ENCODE measurements at regions of chr19 and their contacts with region 1.

Region 1: DNA sequence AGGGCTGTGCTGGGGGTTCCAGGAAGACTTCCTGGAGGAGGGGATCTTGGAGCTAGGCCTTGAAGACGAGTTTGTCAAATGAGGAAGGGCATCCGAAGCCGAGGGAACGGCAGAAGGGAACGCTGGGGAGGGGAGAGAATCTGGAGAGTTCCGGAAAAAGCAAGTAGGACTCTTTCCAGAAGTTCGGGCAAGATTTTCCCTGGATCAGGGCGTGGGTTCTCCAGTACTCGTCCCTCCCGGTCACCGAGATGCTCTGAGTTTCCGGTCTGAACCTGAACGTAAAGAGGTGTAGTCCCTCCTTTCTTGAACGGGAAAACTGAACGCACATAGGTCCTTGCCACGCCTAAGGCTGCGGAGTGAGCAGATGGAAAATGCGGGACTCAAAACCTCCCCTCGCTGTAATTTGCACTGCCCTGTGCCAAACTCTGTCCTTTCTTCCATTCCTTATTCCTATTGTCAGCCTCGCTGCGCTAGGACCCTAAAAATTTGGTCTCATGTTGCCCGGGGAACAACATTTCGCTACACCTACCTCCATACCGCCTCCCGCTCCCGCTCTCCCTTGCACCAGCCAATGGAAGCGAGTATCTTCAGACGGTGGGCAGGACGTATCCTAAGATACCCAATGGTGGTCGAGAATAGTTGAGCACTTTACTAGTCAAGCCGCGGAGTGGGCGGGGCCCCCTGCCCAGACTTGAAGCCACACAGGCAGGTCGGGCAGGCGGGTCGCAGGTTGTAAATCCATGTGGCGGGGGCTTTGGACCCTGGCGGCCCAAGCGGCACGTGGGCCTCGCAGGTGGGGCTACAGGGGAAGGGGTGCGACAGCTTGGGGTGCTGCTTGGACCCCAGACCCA is at the start of gene GTPBP3:
- DNase-seq: peak; percentile 97
- ATAC-seq: peak; percentile 88
- H3K4me3 ChIP-seq: peak within 1 kb of the TSS; percentile 55 to 97 (median 85)
- H3K4me3 Mint-ChIP-seq: peak within 1 kb of the TSS; percentile 92
- H3K27ac ChIP-seq: peak within 1 kb of the TSS; percentile 39 to 85
- H3K27ac Mint-ChIP-seq: peak within 1 kb of the TSS; percentile 92
- H3K4me1 ChIP-seq: peaks cover 19 to 33% of the 10 kb centered on the region in 2 donors
- H3K4me1 Mint-ChIP-seq: peaks cover 40% of the 10 kb centered on the region
- H3K27me3 ChIP-seq: peaks cover 0 to 6% (median 0%) of the 10 kb centered on the region in 4 experiments
- H3K27me3 Mint-ChIP-seq: no peaks in the 10 kb centered on the region
- CTCF ChIP-seq: no peak
- total RNA-seq, gene GTPBP3: 44.3 and 44.9 TPM in 2 replicates

Region 2: GRCh38 chr19:17215125-17215971 is 121.7 kb before region 1 on chr19 and contains the start of gene USE1:
- CTCF ChIA-PET with region 1: no interaction called
- POLR2A ChIA-PET with region 1: no interaction called
- intact Hi-C with region 1: loop called (anchors 1 kb)
- DNase-seq: peak; percentile 93
- ATAC-seq: peak; percentile 93
- H3K4me3 ChIP-seq: peak within 1 kb of the TSS; percentile 41 to 94 (median 80)
- H3K4me3 Mint-ChIP-seq: peak within 1 kb of the TSS; percentile 92
- H3K27ac ChIP-seq: peak within 1 kb of the TSS; percentile 91
- H3K27ac Mint-ChIP-seq: peak within 1 kb of the TSS; percentile 97
- H3K4me1 ChIP-seq: peaks cover 10 to 24% of the 10 kb centered on the region in 2 donors
- H3K4me1 Mint-ChIP-seq: peaks cover 19% of the 10 kb centered on the region
- H3K27me3 ChIP-seq: no peaks in the 10 kb centered on the region
- H3K27me3 Mint-ChIP-seq: no peaks in the 10 kb centered on the region
- CTCF ChIP-seq: no peak
- total RNA-seq, gene USE1: 39.9 and 49.5 TPM in 2 replicates

Region 3: DNA sequence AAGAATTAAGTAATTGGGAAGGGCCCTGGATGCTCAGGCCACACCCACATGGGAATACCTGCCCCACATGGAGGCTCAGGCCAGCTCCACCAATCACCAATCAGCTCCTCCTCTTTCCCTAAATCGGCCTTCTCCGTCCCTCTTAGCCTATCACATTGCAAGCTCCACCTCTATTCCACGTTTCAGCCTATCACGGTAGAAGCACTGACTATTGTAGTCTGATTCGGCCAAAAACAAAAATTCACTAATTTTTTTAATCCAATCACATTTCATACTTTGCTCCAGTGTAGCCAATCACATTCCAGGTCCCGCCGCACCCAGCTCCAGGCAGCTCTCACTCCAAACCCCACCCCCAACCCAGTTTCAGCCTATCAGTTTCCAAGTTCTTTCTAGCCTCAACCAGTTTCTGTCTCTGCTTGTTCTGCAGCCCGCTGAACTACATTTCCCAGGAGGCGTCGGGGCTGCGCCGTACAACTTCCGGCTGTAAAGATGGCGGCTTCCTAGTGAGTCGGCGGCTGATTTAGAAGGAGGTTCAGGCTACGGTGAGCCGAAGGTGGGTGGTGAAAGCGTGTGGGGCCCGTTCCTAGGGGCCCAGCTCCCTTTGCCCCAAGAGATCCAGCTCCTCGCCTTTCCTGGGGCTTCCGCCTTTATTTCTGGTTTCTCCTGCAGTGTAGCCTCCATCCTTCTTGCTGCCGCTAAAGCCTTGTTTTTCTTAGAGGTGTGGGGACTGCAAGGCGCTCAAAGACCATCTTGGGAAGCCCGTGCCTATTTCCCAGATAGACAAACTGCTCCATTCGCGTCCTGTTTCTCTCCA is 69.9 kb before region 1 on chr19 and contains the start of gene BABAM1:
- CTCF ChIA-PET with region 1: no interaction called
- POLR2A ChIA-PET with region 1: no interaction called
- intact Hi-C with region 1: loop called (anchors 1 kb)
- DNase-seq: peak; percentile 98
- ATAC-seq: peak; percentile 89
- H3K4me3 ChIP-seq: peak within 1 kb of the TSS; percentile 76 to 95 (median 87)
- H3K4me3 Mint-ChIP-seq: peak within 1 kb of the TSS; percentile 84
- H3K27ac ChIP-seq: peak within 1 kb of the TSS; percentile 56 to 67
- H3K27ac Mint-ChIP-seq: peak within 1 kb of the TSS; percentile 86
- H3K4me1 ChIP-seq: peaks cover 6 to 24% of the 10 kb centered on the region in 2 donors
- H3K4me1 Mint-ChIP-seq: peaks cover 18% of the 10 kb centered on the region
- H3K27me3 ChIP-seq: no peaks in the 10 kb centered on the region
- H3K27me3 Mint-ChIP-seq: no peaks in the 10 kb centered on the region
- CTCF ChIP-seq: no peak
- total RNA-seq, gene BABAM1: 126 and 129 TPM in 2 replicates

Region 4: DNA sequence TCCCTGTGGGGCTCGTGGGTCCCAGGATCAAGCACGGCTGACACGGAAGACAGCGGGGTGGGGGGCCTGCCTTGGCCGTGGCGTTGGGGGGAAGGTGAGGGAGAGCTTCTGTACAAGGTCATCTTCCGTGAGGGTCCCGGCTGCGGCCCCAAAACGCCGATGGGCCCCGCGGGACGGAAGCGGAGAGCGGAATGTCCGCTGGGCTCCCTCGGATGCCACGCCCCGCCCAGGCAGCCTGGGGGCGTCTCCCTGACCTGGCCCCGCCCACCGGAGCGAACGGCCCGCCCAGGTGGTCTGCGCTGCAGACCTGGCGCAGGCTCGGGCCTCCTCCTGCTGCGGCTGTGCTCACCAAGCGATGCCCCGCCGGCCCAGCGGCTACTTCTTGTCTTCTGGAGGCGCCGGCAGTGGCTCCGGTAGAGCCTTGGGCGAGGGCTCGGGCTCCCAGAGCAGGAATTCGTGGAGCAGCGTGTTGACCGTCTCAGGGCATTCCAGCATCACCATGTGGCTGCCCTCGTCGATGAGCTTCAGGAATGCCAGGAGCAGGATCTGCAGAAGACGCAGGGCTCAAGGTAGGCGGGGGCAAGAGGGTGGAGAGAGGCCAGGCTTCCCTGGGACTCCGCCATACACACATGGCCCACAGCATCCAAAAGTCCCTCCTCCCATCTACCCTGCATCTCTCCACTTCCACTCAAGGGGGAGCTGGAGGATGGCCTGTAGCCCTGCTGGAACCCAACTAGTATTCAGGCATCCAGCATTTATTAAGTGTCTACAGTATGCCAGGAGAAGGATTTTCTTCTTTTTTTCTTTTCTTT is 44.6 kb before region 1 on chr19:
- CTCF ChIA-PET with region 1: interaction called, 4 read pairs
- POLR2A ChIA-PET with region 1: no interaction called
- intact Hi-C with region 1: loop called (anchors 1 kb)
- DNase-seq: peak; percentile 85
- ATAC-seq: peak; percentile 93
- H3K4me3 ChIP-seq: peak overlapping the region; percentile 30 to 75 (median 60)
- H3K4me3 Mint-ChIP-seq: peak overlapping the region; percentile 93
- H3K27ac ChIP-seq: no peak overlapping the region
- H3K27ac Mint-ChIP-seq: peak overlapping the region; percentile 81
- H3K4me1 ChIP-seq: peaks cover 0 to 10% of the 10 kb centered on the region in 2 donors
- H3K4me1 Mint-ChIP-seq: peaks cover 12% of the 10 kb centered on the region
- H3K27me3 ChIP-seq: no peaks in the 10 kb centered on the region
- H3K27me3 Mint-ChIP-seq: no peaks in the 10 kb centered on the region
- CTCF ChIP-seq: peak; percentile 79

Region 5: DNA sequence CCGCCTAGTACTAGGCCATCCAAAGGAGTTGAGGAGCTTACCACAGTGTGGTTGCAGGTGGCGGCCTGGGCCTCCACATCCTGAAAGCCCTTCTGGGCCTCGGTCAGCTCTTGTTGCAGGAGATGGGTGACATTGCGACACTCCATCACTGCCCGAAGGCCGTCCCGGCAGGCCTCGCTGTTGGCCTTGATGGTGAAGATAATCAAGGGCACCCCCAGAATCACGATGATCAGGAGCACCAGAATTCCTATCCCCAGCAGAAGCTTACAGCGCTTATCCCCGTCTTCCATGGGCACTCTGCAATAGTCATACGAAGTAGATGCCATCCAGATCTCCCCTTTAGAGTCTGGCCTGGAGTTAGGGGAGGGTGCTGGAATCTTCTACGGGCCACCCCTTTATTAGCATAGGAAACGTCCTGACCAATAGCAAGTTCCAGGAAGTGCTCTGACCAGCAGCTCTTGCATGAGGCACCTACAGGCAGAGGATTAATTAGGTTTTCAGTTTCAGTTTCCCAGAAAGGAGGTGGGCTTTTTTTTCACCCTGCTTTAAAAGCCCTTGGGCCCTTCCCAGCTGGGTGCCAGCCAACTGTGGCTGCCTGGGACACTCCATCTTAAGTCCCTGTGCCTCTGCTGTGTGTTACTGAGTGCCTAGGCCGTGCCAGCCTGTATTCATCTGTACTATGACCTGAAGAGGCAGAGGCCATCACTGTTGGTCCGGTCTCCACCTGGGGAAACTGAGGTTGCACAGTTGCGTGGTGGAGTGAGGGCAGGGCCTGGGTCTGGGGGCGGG is 68.3 kb after region 1 on chr19 and contains the start of gene BST2:
- CTCF ChIA-PET with region 1: no interaction called
- POLR2A ChIA-PET with region 1: no interaction called
- intact Hi-C with region 1: loop called (anchors 1 kb)
- DNase-seq: peak; percentile 81
- ATAC-seq: peak; percentile 91
- H3K4me3 ChIP-seq: peak within 1 kb of the TSS; percentile 62 to 95 (median 75)
- H3K4me3 Mint-ChIP-seq: peak within 1 kb of the TSS; percentile 85
- H3K27ac ChIP-seq: peak within 1 kb of the TSS; percentile 72 to 86
- H3K27ac Mint-ChIP-seq: peak within 1 kb of the TSS; percentile 86
- H3K4me1 ChIP-seq: peaks cover 26 to 45% of the 10 kb centered on the region in 2 donors
- H3K4me1 Mint-ChIP-seq: peaks cover 42% of the 10 kb centered on the region
- H3K27me3 ChIP-seq: no peaks in the 10 kb centered on the region
- H3K27me3 Mint-ChIP-seq: no peaks in the 10 kb centered on the region
- CTCF ChIP-seq: no peak
- total RNA-seq, gene BST2: 59.7 and 66.0 TPM in 2 replicates

Region 6: DNA sequence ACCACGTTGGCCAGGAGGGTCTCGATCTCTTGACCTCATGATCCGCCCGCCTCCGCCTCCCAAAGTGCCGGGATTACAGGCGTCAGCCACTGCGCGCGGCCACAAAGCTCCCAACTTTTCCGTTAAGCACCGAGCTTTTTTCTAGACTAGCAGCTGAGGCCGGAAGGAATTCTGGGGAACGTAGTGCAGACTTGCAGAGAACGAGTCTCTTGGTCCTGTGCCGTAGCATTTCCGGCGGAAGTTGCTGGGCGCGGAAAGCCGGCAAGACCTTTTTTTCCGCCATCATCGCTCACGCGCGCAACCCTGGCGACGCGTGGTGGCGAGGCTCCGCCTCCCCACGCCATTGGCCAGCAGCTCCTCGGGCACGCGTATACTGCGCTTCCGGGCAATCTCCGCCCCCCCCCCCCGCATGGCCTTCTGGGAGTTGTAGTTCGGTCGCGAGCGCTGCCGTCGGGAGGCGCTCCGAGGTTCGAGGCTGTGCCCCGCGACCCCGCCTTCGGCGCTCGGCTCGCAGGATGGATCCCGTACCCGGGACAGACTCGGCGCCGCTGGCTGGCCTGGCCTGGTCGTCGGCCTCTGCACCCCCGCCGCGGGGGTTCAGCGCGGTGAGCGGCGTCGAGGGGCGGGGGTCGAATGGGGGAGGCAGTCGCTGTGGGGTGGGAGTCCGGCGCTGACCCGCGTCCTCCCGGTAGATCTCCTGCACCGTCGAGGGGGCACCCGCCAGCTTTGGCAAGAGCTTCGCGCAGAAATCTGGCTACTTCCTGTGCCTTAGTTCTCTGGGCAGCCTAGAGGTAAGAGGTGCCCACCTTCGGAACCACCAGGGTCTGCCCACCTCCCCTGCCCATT is 82.7 kb after region 1 on chr19 and contains the start of gene MVB12A:
- CTCF ChIA-PET with region 1: no interaction called
- POLR2A ChIA-PET with region 1: interaction called, 5 read pairs
- intact Hi-C with region 1: loop called (anchors 1 kb)
- DNase-seq: peak; percentile 98
- ATAC-seq: peak; percentile 97
- H3K4me3 ChIP-seq: peak within 1 kb of the TSS; percentile 71 to 89 (median 76)
- H3K4me3 Mint-ChIP-seq: peak within 1 kb of the TSS; percentile 96
- H3K27ac ChIP-seq: peak within 1 kb of the TSS; percentile 33 to 60
- H3K27ac Mint-ChIP-seq: peak within 1 kb of the TSS; percentile 93
- H3K4me1 ChIP-seq: peaks cover 12 to 16% of the 10 kb centered on the region in 2 donors
- H3K4me1 Mint-ChIP-seq: peaks cover 15% of the 10 kb centered on the region
- H3K27me3 ChIP-seq: no peaks in the 10 kb centered on the region
- H3K27me3 Mint-ChIP-seq: no peaks in the 10 kb centered on the region
- CTCF ChIP-seq: no peak
- total RNA-seq, gene MVB12A: 26.8 and 33.6 TPM in 2 replicates

Region 7: GRCh38 chr19:17632577-17632976 is 295.5 kb after region 1 on chr19:
- CTCF ChIA-PET with region 1: no interaction called
- POLR2A ChIA-PET with region 1: no interaction called
- intact Hi-C with region 1: no loop called
- DNase-seq: no peak
- ATAC-seq: no peak
- H3K4me3 ChIP-seq: no peak overlapping the region
- H3K4me3 Mint-ChIP-seq: no peak overlapping the region
- H3K27ac ChIP-seq: no peak overlapping the region
- H3K27ac Mint-ChIP-seq: no peak overlapping the region
- H3K4me1 ChIP-seq: no peaks in the 10 kb centered on the region
- H3K4me1 Mint-ChIP-seq: no peaks in the 10 kb centered on the region
- H3K27me3 ChIP-seq: peaks cover 0 to under 1% (median 0%) of the 10 kb centered on the region in 4 experiments
- H3K27me3 Mint-ChIP-seq: peaks cover 4% of the 10 kb centered on the region
- CTCF ChIP-seq: no peak

Measured in B cell (primary cell).